CD4-positive, alpha-beta T cell (primary cell): ENCODE measurements at regions of chr17 and their contacts with region 1.

Region 1: DNA sequence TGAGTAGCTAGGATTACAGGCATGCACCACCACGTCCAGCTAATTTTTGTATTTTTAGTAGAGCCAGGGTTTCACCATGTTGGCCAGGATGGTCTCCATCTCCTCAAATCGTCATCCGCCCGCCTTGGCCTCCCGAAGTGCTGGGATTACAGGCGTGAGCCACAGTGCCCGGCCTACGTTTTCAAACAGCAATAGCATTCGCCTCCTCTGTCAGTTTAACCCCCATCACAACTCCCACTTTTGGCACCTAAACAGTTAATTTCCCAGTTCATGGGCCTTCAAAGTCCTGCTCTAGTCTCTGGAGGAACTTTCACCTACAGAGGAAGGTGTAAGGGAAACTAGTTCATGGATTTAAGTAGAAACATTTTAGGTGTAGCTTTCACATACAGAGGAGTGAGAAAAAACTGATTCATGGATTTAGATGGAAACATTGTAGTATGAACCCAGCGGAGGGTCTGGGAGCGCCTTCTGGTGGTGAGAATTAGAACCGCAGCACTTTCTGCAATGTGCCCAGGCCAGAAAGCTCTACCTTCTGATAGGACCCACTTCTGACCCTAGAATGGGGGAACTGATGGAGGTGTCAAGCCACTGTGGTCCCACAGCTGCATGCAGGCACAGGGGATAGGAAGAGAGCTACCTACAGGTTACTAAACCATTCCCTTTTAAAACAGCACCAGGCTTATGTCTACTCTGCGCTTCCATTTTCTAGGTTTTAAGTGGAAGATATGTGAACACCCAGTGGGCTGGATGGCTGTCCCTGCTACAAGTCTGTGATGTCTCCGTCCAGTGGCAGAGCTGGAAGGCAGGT is 12.0 kb upstream of the MEOX1 start:
- DNase-seq: peak; percentile 37 to 83 (median 68)
- ATAC-seq: peak; percentile 70
- H3K4me3 ChIP-seq: no peak overlapping the region
- H3K4me3 Mint-ChIP-seq: no peak overlapping the region
- H3K27ac ChIP-seq: no peak overlapping the region
- H3K27ac Mint-ChIP-seq: no peak overlapping the region
- H3K4me1 ChIP-seq: peaks cover 16% of the 10 kb centered on the region
- H3K4me1 Mint-ChIP-seq: peaks cover 10% of the 10 kb centered on the region
- H3K27me3 ChIP-seq: no peaks in the 10 kb centered on the region
- H3K27me3 Mint-ChIP-seq: no peaks in the 10 kb centered on the region
- CTCF ChIP-seq: peak; percentile 90

Region 2: GRCh38 chr17:43576563-43577229 is 97.0 kb before region 1 on chr17:
- CTCF ChIA-PET with region 1: interaction called, 57 read pairs
- POLR2A ChIA-PET with region 1: interaction called, 4 read pairs
- intact Hi-C with region 1: loop called (anchors 1 kb)
- DNase-seq: peak; percentile 34 to 87 (median 59)
- ATAC-seq: peak; percentile 73
- H3K4me3 ChIP-seq: no peak overlapping the region
- H3K4me3 Mint-ChIP-seq: no peak overlapping the region
- H3K27ac ChIP-seq: no peak overlapping the region
- H3K27ac Mint-ChIP-seq: no peak overlapping the region
- H3K4me1 ChIP-seq: peaks cover 20% of the 10 kb centered on the region
- H3K4me1 Mint-ChIP-seq: peaks cover 15% of the 10 kb centered on the region
- H3K27me3 ChIP-seq: peaks cover 0 to 4% of the 10 kb centered on the region in 2 experiments
- H3K27me3 Mint-ChIP-seq: no peaks in the 10 kb centered on the region
- CTCF ChIP-seq: peak; percentile 98

Region 3: DNA sequence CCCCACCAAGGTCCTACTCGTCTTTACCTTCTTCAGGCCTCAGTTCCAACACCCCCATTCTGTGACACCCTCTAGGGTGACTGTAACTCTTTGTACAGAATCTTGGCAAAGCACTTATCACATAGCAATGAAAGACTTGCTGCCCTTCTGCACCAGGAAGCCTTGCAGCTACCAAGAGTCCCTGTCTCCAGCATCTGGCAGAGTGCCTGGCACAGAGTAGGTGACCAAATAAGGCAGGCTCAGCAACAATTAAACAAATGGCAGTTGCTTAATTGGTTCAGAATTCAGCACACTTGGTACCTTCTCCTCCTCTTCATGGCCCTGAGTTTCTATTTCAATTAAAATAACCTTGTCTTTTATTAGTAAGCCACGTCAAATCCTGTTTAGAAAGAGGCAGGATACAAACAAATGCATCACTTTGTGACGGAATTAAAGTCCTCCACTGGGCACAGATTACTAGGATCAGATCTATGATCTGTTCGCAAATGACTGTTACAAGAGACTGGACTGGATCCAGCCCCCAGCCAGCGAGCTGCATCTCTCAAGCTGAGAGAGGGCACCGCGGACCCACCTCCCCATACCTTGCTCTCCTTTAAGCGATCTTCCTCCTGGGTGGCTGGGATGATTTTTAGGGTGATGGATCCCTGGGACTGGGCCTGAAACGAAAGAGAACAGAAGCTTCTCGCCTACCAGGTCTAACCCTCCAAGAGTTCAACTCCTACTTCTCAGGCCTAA is 149.8 kb after region 1 on chr17:
- CTCF ChIA-PET with region 1: no interaction called
- POLR2A ChIA-PET with region 1: no interaction called
- intact Hi-C with region 1: no loop called
- DNase-seq: no peak
- ATAC-seq: no peak
- H3K4me3 ChIP-seq: no peak overlapping the region
- H3K4me3 Mint-ChIP-seq: no peak overlapping the region
- H3K27ac ChIP-seq: no peak overlapping the region
- H3K27ac Mint-ChIP-seq: no peak overlapping the region
- H3K4me1 ChIP-seq: no peaks in the 10 kb centered on the region
- H3K4me1 Mint-ChIP-seq: no peaks in the 10 kb centered on the region
- H3K27me3 ChIP-seq: no peaks in the 10 kb centered on the region
- H3K27me3 Mint-ChIP-seq: no peaks in the 10 kb centered on the region
- CTCF ChIP-seq: no peak